H1 (cell line): ENCODE measurements at regions of chr22 and their contacts with region 1.

Region 1: DNA sequence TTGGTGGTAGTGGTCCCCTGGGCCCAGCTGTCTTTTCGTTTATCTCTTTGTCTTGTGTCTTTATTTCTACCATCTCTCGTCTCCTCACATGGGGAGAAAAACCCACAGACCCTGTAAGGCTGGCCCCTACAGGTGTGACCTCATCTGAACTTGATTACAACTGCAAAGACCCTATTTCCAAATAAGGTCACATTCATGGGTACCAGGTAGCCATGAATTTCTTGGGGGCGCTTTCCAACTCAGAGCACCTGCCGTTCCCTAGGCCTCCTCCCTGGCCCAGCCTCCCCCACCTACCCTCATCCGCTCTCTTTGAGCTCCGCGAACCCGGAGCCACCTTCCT is 14.0 kb upstream of the RRP7A start:
- DNase-seq: no peak
- H3K4me3 ChIP-seq: no peak overlapping the region
- H3K27ac ChIP-seq: no peak overlapping the region
- H3K4me1 ChIP-seq: no peaks in the 10 kb centered on the region
- H3K27me3 ChIP-seq: no peaks in the 10 kb centered on the region
- CTCF ChIP-seq: no peak
- EP300 ChIP-seq: no peak
- POLR2A ChIP-seq: no peak
- RAD21 ChIP-seq: no peak

Region 2: DNA sequence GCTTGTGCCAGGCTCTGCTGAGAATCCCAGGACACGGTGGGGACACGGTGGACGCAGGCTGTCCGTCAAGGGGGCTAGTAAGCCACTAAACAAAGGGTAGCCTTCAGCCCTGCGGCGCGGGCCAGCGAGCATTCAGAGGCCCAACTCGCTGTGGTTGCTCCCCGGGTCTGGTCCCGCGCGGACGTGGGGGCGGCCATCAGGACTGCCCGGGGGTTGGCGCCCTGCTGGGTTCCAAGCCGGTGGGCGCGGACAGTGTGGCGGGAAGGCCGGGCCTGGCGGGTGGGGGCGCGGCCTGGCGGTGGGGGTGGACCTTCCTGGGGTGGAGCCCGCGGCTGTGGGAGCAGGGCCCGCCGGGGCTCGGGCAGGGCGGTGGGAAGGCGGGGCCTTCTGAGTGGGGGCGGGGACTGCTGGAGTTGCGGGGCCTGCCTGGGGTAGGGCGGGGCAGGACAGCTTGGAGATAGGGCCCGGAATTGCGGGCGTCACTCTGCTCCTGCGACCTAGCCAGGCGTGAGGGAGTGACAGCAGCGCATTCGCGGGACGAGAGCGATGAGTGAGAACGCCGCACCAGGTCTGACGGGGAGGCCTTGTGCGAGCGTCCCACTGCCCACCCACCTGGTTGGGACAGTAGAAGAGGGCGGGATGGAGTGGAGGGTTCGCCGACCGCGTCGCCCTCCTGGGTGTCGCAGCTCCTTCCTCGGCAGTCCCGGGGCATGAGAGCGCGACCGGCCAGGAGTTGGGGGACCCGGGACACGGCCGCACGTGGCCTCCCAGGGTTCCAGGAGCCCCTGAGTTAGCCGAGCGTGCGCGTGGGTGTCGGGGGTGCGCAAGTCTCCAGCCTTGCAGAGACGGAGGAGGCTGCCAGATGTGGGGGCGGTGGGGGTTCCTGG is 20.1 kb after region 1 on chr22 and contains the start of gene SERHL2:
- CTCF ChIA-PET with region 1: interaction called, 12 read pairs
- POLR2A ChIA-PET with region 1: no interaction called
- DNase-seq: peak; percentile 31 to 93
- H3K4me3 ChIP-seq: peak within 1 kb of the TSS; percentile 44 to 73 (median 56)
- H3K27ac ChIP-seq: no peak within 1 kb of the TSS
- H3K4me1 ChIP-seq: peaks cover 0 to 13% (median 4%) of the 10 kb centered on the region in 4 experiments; a peak in 4 of 7 replicates
- H3K27me3 ChIP-seq: peaks cover 0 to 10% (median 9%) of the 10 kb centered on the region in 4 experiments; a peak in 4 of 7 replicates
- CTCF ChIP-seq: no peak
- EP300 ChIP-seq: no peak
- POLR2A ChIP-seq: peak in 1 of 2 experiments; percentile 38; a peak in 1 of 3 replicates
- RAD21 ChIP-seq: no peak
- total RNA-seq, gene SERHL2: 2.1 TPM in 1 of 2 replicates, not detected in the other

Region 3: GRCh38 chr22:42560781-42561180 is 27.2 kb after region 1 on chr22:
- CTCF ChIA-PET with region 1: interaction called, 31 read pairs
- POLR2A ChIA-PET with region 1: interaction called, 4 read pairs
- DNase-seq: no peak
- H3K4me3 ChIP-seq: no peak overlapping the region
- H3K27ac ChIP-seq: no peak overlapping the region
- H3K4me1 ChIP-seq: peaks cover 0 to 3% (median 1%) of the 10 kb centered on the region in 4 experiments; a peak in 1 of 7 replicates
- H3K27me3 ChIP-seq: peaks cover 0 to 8% (median 3%) of the 10 kb centered on the region in 4 experiments; a peak in 5 of 7 replicates
- CTCF ChIP-seq: peak; percentile 68 to 83 (median 69)
- EP300 ChIP-seq: no peak
- POLR2A ChIP-seq: no peak
- RAD21 ChIP-seq: peak; percentile 59 to 72